H1 (cell line): ENCODE measurements at regions of chr11 and their contacts with region 1.

Region 1: GRCh38 chr11:57324886-57325734 is at the start of gene TNKS1BP1:
- DNase-seq: peak; percentile 95
- H3K4me3 ChIP-seq: peak within 1 kb of the TSS; percentile 82 to 90 (median 88)
- H3K27ac ChIP-seq: peak within 1 kb of the TSS; percentile 96
- H3K4me1 ChIP-seq: peaks cover 0 to 24% (median 19%) of the 10 kb centered on the region in 4 experiments; a peak in 6 of 7 replicates
- H3K27me3 ChIP-seq: no peaks in the 10 kb centered on the region
- CTCF ChIP-seq: no peak
- EP300 ChIP-seq: no peak
- POLR2A ChIP-seq: peak; percentile 85 to 96
- RAD21 ChIP-seq: peak in 1 of 2 experiments; percentile 7; a peak in 1 of 4 replicates
- total RNA-seq, gene TNKS1BP1: 122 TPM in 2 replicates

Region 2: DNA sequence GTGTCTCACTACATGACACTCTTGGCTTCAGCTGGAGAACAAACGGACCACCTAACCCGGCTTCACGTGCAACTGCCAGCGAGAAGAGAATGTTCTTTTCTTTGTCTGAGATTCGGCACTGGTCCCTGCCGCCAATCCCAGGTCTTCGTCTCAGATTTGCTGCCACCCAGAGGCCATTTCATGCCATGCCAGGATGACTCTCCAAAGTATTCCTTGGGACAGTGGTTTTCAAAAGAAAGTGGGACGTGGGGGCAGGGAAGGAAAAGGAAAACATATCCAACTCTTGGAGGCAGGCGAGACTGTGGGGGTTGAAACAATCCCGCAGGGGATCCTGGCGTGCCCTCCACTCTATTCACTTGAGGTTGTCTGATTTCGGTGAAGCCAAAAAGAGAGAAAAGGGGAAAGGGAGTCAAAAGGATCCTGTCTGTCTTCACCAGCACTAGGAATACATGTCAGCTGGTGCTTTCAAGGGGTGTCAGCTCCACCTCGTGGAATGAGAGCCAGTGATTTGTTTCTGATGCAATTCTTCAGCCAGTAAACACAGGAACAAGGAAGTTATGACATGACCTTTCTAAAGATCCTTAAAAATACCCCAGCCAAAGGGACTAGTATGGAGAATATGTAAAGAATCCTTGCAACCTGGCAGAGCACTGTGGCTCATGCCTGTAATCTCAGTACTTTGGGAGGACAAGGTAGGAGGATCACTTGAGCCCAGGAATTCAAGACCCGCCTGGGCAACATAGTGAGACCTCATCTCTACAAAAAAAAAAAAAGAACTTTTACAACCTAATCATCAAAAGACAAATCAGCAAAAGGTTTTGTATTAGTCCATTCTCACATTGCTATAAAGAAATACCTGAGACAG is 47.0 kb before region 1 on chr11:
- CTCF ChIA-PET with region 1: no interaction called
- POLR2A ChIA-PET with region 1: interaction called, 12 read pairs
- DNase-seq: peak; percentile 43 to 84
- H3K4me3 ChIP-seq: peak overlapping the region in 1 of 4 experiments; percentile 37; a peak in 3 of 8 replicates
- H3K27ac ChIP-seq: peak overlapping the region; percentile 37; the same call in 1 of the 2 replicates
- H3K4me1 ChIP-seq: peaks cover 2 to 10% (median 5%) of the 10 kb centered on the region in 4 experiments; a peak in 6 of 7 replicates
- H3K27me3 ChIP-seq: peaks cover 0 to 2% (median 0%) of the 10 kb centered on the region in 4 experiments; a peak in 3 of 7 replicates
- CTCF ChIP-seq: peak; percentile 71 to 91 (median 72)
- EP300 ChIP-seq: no peak
- POLR2A ChIP-seq: peak in 1 of 2 experiments; percentile 25; a peak in 1 of 3 replicates
- RAD21 ChIP-seq: peak; percentile 70 to 75

Region 3: GRCh38 chr11:57303990-57304579 is 21.0 kb before region 1 on chr11:
- CTCF ChIA-PET with region 1: interaction called, 15 read pairs
- POLR2A ChIA-PET with region 1: interaction called, 1,279 read pairs
- DNase-seq: no peak
- H3K4me3 ChIP-seq: no peak overlapping the region
- H3K27ac ChIP-seq: no peak overlapping the region
- H3K4me1 ChIP-seq: peaks cover 0 to 5% (median under 1%) of the 10 kb centered on the region in 4 experiments; a peak in 5 of 7 replicates
- H3K27me3 ChIP-seq: no peaks in the 10 kb centered on the region
- CTCF ChIP-seq: no peak
- EP300 ChIP-seq: no peak
- POLR2A ChIP-seq: no peak
- RAD21 ChIP-seq: no peak

Region 4: DNA sequence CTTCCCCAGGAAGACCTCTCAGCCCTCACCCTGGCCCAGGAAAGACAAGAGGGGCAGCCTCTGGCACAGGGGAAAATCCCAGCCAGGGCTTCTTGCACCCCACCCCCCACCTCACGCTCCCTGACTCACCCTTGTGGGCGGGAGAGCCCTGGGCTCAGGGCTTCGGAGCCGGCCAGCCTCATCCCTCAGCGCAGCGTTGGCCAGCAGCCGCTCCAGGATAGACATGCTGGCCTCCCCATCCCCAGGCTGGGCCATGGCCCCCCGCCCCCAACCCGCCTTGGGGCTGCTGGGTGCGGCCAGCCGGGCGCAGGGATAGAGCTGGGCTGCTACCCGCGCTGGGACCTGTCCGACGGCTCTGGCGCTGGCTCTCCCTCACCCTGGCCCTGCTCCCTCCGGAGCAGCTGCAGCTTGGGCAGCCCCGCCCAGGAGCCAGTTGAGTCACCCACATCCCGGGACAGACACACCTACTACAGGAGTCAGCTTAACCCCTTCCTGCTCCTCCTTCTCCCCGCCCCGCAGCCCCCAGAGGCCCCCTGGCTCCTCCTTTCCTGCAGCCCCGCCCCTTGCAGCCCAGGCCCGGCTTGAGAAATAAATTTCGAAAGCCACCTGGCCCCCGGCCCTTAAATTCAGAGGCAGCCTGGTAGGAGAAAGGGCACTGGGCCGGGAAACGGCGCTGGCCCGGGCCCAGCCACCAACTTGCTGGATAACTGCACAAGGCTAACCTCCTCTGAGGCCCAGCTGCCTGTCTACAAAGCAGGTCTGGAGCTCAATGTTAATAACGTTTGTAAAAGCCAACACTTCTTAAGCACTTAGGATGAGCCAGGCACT is 13.8 kb before region 1 on chr11:
- CTCF ChIA-PET with region 1: interaction called, 15 read pairs
- POLR2A ChIA-PET with region 1: interaction called, 1,279 read pairs
- DNase-seq: peak; percentile 83 to 94
- H3K4me3 ChIP-seq: peak overlapping the region; percentile 34 to 60 (median 42)
- H3K27ac ChIP-seq: peak overlapping the region; percentile 59; the same call in 1 of the 2 replicates
- H3K4me1 ChIP-seq: peaks cover 14 to 34% (median 24%) of the 10 kb centered on the region in 4 experiments
- H3K27me3 ChIP-seq: no peaks in the 10 kb centered on the region
- CTCF ChIP-seq: no peak
- EP300 ChIP-seq: peak in 1 of 2 experiments; percentile 53; a peak in 1 of 3 replicates
- POLR2A ChIP-seq: peak; percentile 52 to 83
- RAD21 ChIP-seq: no peak

Region 5: GRCh38 chr11:57340039-57340615 is 15.0 kb after region 1 on chr11:
- CTCF ChIA-PET with region 1: interaction called, 20 read pairs
- POLR2A ChIA-PET with region 1: interaction called, 1,279 read pairs
- DNase-seq: no peak
- H3K4me3 ChIP-seq: no peak overlapping the region
- H3K27ac ChIP-seq: no peak overlapping the region
- H3K4me1 ChIP-seq: peaks cover 4 to 14% (median 8%) of the 10 kb centered on the region in 4 experiments; a peak in 6 of 7 replicates
- H3K27me3 ChIP-seq: peaks cover 0 to 9% (median 4%) of the 10 kb centered on the region in 4 experiments; a peak in 4 of 7 replicates
- CTCF ChIP-seq: peak; percentile 39 to 68 (median 64)
- EP300 ChIP-seq: no peak
- POLR2A ChIP-seq: no peak
- RAD21 ChIP-seq: peak; percentile 30 to 55

Region 6: GRCh38 chr11:57358543-57358961 is 33.4 kb after region 1 on chr11:
- CTCF ChIA-PET with region 1: no interaction called
- POLR2A ChIA-PET with region 1: interaction called, 10 read pairs
- DNase-seq: no peak
- H3K4me3 ChIP-seq: no peak overlapping the region
- H3K27ac ChIP-seq: no peak overlapping the region
- H3K4me1 ChIP-seq: peaks cover 0 to 6% (median 1%) of the 10 kb centered on the region in 4 experiments; a peak in 3 of 7 replicates
- H3K27me3 ChIP-seq: no peaks in the 10 kb centered on the region; a peak in 1 of 7 replicates
- CTCF ChIP-seq: no peak
- EP300 ChIP-seq: no peak
- POLR2A ChIP-seq: no peak
- RAD21 ChIP-seq: no peak

Region 7: GRCh38 chr11:57480409-57481137 is 155.5 kb after region 1 on chr11:
- CTCF ChIA-PET with region 1: interaction called, 3 read pairs
- POLR2A ChIA-PET with region 1: interaction called, 10 read pairs
- DNase-seq: peak in 1 of 2 experiments; percentile 97
- H3K4me3 ChIP-seq: no peak overlapping the region
- H3K27ac ChIP-seq: no peak overlapping the region
- H3K4me1 ChIP-seq: peaks cover 7 to 32% (median 9%) of the 10 kb centered on the region in 4 experiments
- H3K27me3 ChIP-seq: peaks cover 0 to 35% (median 26%) of the 10 kb centered on the region in 4 experiments; a peak in 6 of 7 replicates
- CTCF ChIP-seq: peak; percentile 86 to 92 (median 90)
- EP300 ChIP-seq: no peak
- POLR2A ChIP-seq: no peak
- RAD21 ChIP-seq: peak; percentile 61 to 75